BJ (cell line): ENCODE measurements at regions of chr12 and their contacts with region 1.

Region 1: DNA sequence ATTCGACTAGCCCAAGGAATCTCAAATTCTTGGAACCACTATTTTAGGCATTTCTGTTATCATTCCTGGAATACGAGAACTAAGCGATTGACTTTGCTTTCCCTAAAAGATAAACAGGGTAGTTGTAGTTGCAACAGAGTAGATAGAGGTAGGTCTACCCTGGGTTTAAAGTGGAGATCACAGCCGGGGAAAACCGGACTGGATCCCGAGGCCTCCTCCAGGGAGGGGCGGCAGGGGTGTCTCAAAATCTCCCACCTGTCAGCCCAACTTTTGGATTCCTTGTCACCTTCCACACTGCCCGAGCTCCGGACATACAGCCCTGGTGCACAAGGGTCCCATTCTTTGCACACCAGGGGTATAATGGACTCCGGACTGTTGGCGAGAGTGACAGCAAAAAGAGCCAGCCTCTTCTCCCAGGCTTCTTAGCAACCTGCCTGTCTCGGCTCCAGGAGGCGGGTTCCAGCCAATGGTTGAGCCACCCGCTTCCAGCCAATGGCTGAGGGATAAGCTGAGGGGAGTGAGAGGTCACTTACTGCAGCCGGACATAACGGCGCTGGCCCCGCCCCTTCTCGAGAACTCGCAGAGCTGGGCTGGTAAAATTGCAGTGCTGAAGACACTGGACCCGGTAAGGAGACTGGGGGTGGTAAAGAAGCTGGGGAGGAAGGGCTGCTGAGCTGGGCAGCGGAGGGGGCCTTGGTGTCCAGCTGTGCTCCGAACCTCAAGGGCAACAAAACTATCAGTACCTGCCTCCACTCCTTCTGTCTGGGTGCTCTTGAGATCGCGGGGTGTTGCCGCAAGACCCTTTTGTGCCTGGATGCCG is at the start of gene SUOX:
- DNase-seq: peak; percentile 89
- H3K4me3 ChIP-seq: peak within 1 kb of the TSS; percentile 72
- H3K27me3 ChIP-seq: no peaks in the 10 kb centered on the region
- CTCF ChIP-seq: no peak
- polyA plus RNA-seq, gene SUOX: 14.4 and 22.3 TPM in 2 replicates

Region 2: DNA sequence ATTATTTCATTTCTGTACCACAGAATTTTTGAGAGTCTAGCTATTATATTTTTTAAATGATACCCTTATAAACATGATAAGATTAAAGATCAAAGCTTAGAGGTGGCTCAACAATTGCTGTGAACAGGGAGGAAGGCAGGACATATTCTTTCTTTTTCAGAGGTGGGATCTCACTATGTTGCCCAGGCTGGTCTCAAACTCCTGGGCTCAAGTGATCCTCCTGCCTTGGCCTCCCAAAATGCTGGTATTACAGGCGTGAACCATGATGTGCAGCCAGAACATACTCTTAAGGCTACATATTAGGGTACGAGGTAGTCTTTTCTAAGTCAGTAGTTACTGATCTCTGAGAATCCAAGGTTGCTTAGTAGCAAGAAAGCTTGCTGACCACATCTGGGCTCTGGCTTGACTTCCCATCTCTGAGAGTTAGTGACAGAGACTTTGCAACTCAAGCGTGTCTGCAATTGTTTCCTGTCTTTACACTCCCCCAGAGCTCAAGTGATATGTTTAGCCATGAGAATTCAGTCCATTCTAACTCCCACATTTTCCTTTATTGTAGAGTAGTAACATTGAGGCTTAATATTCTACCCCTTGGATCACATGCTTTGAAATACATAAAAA is 14.5 kb before region 1 on chr12:
- CTCF ChIA-PET with region 1: interaction called, 52 read pairs
- POLR2A ChIA-PET with region 1: no interaction called
- DNase-seq: no peak
- H3K4me3 ChIP-seq: no peak overlapping the region
- H3K27me3 ChIP-seq: no peaks in the 10 kb centered on the region
- CTCF ChIP-seq: no peak

Region 3: GRCh38 chr12:56007564-56008559 is 10.9 kb after region 1 on chr12:
- CTCF ChIA-PET with region 1: interaction called, 19 read pairs
- POLR2A ChIA-PET with region 1: interaction called, 3 read pairs
- DNase-seq: no peak
- H3K4me3 ChIP-seq: peak overlapping the region; percentile 80
- H3K27me3 ChIP-seq: no peaks in the 10 kb centered on the region
- CTCF ChIP-seq: no peak

Region 4: GRCh38 chr12:56020423-56021184 is 23.7 kb after region 1 on chr12 and contains the start of gene IKZF4:
- CTCF ChIA-PET with region 1: interaction called, 86 read pairs
- POLR2A ChIA-PET with region 1: no interaction called
- DNase-seq: no peak
- H3K4me3 ChIP-seq: peak within 1 kb of the TSS; percentile 23
- H3K27me3 ChIP-seq: no peaks in the 10 kb centered on the region
- CTCF ChIP-seq: no peak
- polyA plus RNA-seq, gene IKZF4: 1.9 and 2.9 TPM in 2 replicates

Region 5: DNA sequence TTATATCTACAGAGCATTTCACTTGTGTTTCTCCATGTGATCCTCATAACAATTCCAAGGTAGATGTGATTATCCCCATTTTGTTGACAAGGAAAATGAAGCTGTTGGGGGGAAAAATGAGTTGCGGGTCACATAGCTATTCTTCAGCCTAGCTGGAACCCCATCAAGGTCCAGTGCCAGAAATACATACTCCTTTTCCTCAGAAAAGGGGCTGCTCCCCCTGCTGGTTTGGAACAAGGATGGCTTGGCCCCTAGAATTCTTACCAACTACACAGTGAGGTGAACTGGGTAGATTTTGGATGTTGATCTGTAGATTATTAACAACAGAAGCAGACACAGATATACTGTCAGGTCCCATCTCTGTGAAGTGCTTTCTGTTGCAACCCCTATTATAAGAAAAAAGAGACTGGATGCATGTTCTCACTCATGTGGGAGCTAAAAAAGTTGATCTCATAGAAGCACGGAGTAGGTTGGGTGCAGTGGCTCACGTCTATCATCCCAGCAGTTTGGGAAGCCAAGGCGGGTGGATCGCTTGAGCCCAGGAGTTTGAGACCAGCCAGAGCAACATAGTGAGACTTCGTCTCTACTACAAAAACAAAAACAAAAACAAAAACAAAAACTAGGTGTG is 32.9 kb after region 1 on chr12:
- CTCF ChIA-PET with region 1: interaction called, 86 read pairs
- POLR2A ChIA-PET with region 1: interaction called, 13 read pairs
- DNase-seq: no peak
- H3K4me3 ChIP-seq: no peak overlapping the region
- H3K27me3 ChIP-seq: no peaks in the 10 kb centered on the region
- CTCF ChIP-seq: peak; percentile 86